ENCODE measurements at regions of chr9 and their contacts with region 1.

Region 1: GRCh38 chr9:121598965-121599871 is 52.2 kb upstream of the DAB2IP start:
- DNase-seq: peak; percentile 85
- ATAC-seq: peak; percentile 78
- H3K4me3 ChIP-seq: peak overlapping the region; percentile 86
- H3K27ac ChIP-seq: peak overlapping the region; percentile 55
- H3K4me1 ChIP-seq: peaks cover 13% of the 10 kb centered on the region; the same call in 1 of the 2 replicates
- H3K27me3 ChIP-seq: no peaks in the 10 kb centered on the region
- CTCF ChIP-seq: no peak

Region 2: GRCh38 chr9:121557581-121558447 is 41.4 kb before region 1 on chr9:
- CTCF ChIA-PET with region 1: interaction called, 14 read pairs
- POLR2A ChIA-PET with region 1: no interaction called
- intact Hi-C with region 1: loop called (anchors 5 kb)
- DNase-seq: peak; percentile 87
- ATAC-seq: peak; percentile 81
- H3K4me3 ChIP-seq: peak overlapping the region; percentile 7; the same call in 1 of the 2 replicates
- H3K27ac ChIP-seq: peak overlapping the region; percentile 95
- H3K4me1 ChIP-seq: peaks cover 31% of the 10 kb centered on the region
- H3K27me3 ChIP-seq: no peaks in the 10 kb centered on the region
- CTCF ChIP-seq: no peak

Region 3: GRCh38 chr9:122218935-122219855 is 620.0 kb after region 1 on chr9:
- CTCF ChIA-PET with region 1: no interaction called
- POLR2A ChIA-PET with region 1: no interaction called
- intact Hi-C with region 1: no loop called
- DNase-seq: no peak
- ATAC-seq: no peak
- H3K4me3 ChIP-seq: no peak overlapping the region
- H3K27ac ChIP-seq: no peak overlapping the region
- H3K4me1 ChIP-seq: peaks cover 19% of the 10 kb centered on the region
- H3K27me3 ChIP-seq: no peaks in the 10 kb centered on the region
- CTCF ChIP-seq: no peak

Measured in PC-3 (cell line).